GM12878 (cell line): ENCODE measurements at regions of chr5 and their contacts with region 1.

Region 1: GRCh38 chr5:24633712-24634325 is 11.0 kb downstream of the CDH10 start:
- DNase-seq: no peak
- ATAC-seq: peak; percentile 51; the same call in 2 of the 3 replicates
- H3K4me3 ChIP-seq: no peak overlapping the region
- H3K27ac ChIP-seq: no peak overlapping the region
- H3K4me1 ChIP-seq: no peaks in the 10 kb centered on the region
- H3K27me3 ChIP-seq: no peaks in the 10 kb centered on the region
- CTCF ChIP-seq: peak; percentile 36 to 56 (median 56); a peak in 5 of 6 replicates
- EP300 ChIP-seq: no peak
- POLR2A ChIP-seq: no peak
- RAD21 ChIP-seq: peak; percentile 67

Region 2: DNA sequence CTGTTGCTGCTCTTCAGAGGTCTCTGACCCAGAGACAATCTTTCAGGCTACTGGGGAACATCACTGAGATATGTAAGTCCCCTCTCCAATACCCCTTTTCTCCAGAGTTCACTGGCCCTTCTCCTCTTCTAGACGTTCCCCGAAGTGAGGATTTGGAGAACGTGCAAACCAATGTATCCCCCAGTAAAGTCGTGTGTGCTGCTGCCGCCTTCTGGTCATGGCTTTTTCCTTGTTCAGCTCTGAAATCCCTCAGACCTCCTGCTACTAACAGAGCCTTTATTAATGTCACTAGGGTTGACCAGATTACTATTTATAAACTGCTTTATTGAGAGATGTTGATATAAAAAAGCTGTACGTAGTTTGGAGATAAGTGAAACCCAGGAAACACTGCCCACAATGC is 1375.9 kb after region 1 on chr5:
- CTCF ChIA-PET with region 1: no interaction called
- POLR2A ChIA-PET with region 1: no interaction called
- RAD21 ChIA-PET with region 1: no interaction called
- SMC1A ChIA-PET with region 1: no interaction called
- in situ Hi-C with region 1: no loop called
- intact Hi-C with region 1: loop called (anchors 10 kb)
- DNase-seq: no peak
- ATAC-seq: no peak
- H3K4me3 ChIP-seq: no peak overlapping the region
- H3K27ac ChIP-seq: no peak overlapping the region
- H3K4me1 ChIP-seq: no peaks in the 10 kb centered on the region
- H3K27me3 ChIP-seq: no peaks in the 10 kb centered on the region
- CTCF ChIP-seq: peak in 2 of 3 experiments; percentile 26 to 28; a peak in 2 of 6 replicates
- EP300 ChIP-seq: no peak
- POLR2A ChIP-seq: no peak
- RAD21 ChIP-seq: no peak